H1 (cell line): ENCODE measurements at regions of chr3 and their contacts with region 1.

Region 1: DNA sequence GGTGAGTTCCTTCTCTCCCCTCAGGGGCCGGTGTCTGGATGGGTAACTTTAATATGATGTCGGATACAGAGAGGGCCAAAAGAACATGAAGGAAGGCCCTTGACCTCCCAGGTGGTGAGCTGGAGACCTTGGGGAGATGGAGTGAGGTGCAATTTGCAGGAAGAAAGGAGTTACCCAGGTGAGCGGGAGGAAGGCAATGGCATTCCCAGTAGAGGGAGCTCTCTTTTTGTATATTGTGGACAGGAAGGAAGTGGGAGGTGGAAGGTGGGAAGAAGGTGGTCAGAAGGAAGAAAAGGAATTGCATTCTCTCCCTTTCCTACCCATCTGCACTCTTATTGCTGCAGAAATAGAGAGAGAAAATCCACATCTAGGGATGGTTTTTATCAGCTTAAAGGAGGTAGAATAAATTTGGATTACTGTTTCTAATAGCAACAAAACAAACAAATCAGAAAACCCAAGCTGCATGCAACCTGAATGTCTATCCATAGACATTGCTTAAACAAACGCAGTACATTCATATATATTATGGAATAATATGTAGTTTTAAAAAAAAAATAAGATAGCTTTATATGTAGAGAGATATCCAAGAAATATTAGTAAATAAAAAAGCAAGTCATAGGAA is 169.0 kb upstream of the TSC22D2 start:
- DNase-seq: peak; percentile 38 to 50
- H3K4me3 ChIP-seq: no peak overlapping the region
- H3K27ac ChIP-seq: no peak overlapping the region
- H3K4me1 ChIP-seq: peaks cover 0 to 8% (median 2%) of the 10 kb centered on the region in 4 experiments; a peak in 4 of 7 replicates
- H3K27me3 ChIP-seq: no peaks in the 10 kb centered on the region
- CTCF ChIP-seq: peak; percentile 44 to 84 (median 72)
- EP300 ChIP-seq: no peak
- POLR2A ChIP-seq: no peak
- RAD21 ChIP-seq: peak; percentile 87 to 90

Region 2: DNA sequence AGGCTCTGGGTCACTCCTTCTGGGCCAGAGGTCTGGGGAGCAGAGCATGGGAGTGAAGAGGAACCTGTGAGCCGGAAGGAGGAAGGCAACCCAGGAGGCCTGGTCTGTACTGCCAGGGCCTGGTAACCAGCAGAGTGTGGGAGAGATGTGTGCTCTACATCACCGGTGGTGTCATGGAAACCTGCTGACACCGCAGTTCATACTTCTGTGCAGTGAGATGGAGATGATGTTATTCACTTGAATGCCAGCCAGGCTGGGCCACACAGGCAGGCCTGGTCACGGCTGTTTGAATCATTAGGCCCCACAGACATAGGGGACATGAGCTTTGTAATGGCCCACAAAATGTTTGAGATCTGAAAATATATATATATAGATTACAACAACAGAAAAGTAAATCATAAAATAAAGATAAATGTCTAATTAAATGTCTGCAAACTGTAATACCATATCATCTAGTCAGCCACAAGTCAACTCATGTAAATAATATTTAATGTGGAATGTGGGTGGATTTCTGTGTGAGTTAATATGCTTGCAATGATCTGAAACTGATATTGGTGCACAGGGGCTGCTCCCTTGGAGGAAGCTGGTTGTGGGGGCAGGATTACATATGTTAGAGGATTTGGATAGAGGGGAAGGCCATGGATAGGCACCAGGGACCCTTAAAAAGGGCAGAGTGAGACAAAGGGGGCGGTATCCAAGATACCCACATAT is 159.9 kb before region 1 on chr3:
- CTCF ChIA-PET with region 1: no interaction called
- POLR2A ChIA-PET with region 1: no interaction called
- DNase-seq: no peak
- H3K4me3 ChIP-seq: no peak overlapping the region
- H3K27ac ChIP-seq: no peak overlapping the region
- H3K4me1 ChIP-seq: peaks cover 0 to 3% (median under 1%) of the 10 kb centered on the region in 4 experiments; a peak in 2 of 7 replicates
- H3K27me3 ChIP-seq: no peaks in the 10 kb centered on the region
- CTCF ChIP-seq: no peak
- EP300 ChIP-seq: no peak
- POLR2A ChIP-seq: no peak
- RAD21 ChIP-seq: no peak

Region 3: GRCh38 chr3:150094150-150094925 is 144.8 kb before region 1 on chr3:
- CTCF ChIA-PET with region 1: no interaction called
- POLR2A ChIA-PET with region 1: no interaction called
- DNase-seq: no peak
- H3K4me3 ChIP-seq: no peak overlapping the region
- H3K27ac ChIP-seq: no peak overlapping the region
- H3K4me1 ChIP-seq: peaks cover 8 to 15% (median 12%) of the 10 kb centered on the region in 4 experiments; a peak in 6 of 7 replicates
- H3K27me3 ChIP-seq: no peaks in the 10 kb centered on the region
- CTCF ChIP-seq: no peak
- EP300 ChIP-seq: no peak
- POLR2A ChIP-seq: no peak
- RAD21 ChIP-seq: no peak

Region 4: DNA sequence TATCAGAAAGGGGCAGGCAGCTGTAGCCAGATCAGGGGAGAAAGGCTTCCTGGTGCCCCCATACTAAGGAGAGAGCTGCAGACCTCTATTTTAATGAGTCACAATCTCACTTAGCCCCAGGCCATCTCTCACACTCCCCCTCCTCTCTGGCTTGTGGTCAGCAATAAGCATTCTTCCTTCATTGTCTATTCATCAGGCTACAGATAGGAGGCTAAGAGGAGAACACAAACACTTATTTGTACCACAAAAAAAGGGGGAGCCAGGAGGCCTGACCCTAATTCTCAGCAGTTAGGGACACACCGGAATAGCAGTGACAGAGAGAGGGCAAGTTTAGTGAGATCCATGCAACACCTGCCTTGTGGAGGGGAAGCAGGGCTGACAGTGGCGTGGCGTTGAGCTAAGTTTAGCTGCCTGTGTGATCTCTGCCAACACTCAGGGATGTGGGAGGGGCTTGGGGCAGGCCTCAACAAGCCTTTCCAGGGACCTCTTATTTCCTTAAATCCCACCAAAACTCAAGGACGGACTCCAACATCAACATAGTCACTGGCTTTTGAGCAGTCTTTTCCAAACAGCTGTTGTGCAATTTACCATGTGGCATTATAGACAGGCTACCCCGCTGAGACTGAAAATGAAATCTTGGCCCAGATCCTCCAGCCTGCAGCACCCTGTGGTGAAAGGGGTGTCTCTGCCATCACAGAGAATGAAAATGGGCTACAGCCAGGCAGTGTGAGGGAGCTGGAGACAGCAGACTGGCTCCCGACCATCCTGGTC is 22.9 kb before region 1 on chr3:
- CTCF ChIA-PET with region 1: interaction called, 14 read pairs
- POLR2A ChIA-PET with region 1: no interaction called
- DNase-seq: no peak
- H3K4me3 ChIP-seq: no peak overlapping the region
- H3K27ac ChIP-seq: no peak overlapping the region
- H3K4me1 ChIP-seq: peaks cover 0 to 6% (median 5%) of the 10 kb centered on the region in 4 experiments; a peak in 5 of 7 replicates
- H3K27me3 ChIP-seq: no peaks in the 10 kb centered on the region
- CTCF ChIP-seq: no peak
- EP300 ChIP-seq: no peak
- POLR2A ChIP-seq: no peak
- RAD21 ChIP-seq: no peak

Region 5: DNA sequence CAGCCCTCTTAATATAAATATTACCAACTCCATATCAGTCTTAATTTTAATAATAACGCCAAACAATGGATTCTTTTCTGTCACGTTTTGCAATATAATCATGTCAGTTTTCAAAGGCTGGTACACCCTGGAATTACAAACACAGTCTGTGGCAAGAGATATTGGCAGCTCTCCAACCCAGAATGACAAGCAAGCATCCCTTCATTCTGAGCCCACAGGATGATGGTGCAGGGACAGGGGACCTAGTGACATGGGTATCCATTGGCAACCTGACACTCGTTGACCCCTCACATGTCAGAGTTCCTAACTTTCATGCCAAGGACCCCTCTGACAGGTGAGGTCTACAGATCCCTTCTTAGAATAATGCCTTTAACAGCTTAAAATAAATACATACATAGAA is 14.5 kb after region 1 on chr3:
- CTCF ChIA-PET with region 1: interaction called, 34 read pairs
- POLR2A ChIA-PET with region 1: interaction called, 3 read pairs
- DNase-seq: no peak
- H3K4me3 ChIP-seq: no peak overlapping the region
- H3K27ac ChIP-seq: no peak overlapping the region
- H3K4me1 ChIP-seq: no peaks in the 10 kb centered on the region; a peak in 1 of 7 replicates
- H3K27me3 ChIP-seq: no peaks in the 10 kb centered on the region
- CTCF ChIP-seq: no peak
- EP300 ChIP-seq: no peak
- POLR2A ChIP-seq: no peak
- RAD21 ChIP-seq: no peak

Region 6: DNA sequence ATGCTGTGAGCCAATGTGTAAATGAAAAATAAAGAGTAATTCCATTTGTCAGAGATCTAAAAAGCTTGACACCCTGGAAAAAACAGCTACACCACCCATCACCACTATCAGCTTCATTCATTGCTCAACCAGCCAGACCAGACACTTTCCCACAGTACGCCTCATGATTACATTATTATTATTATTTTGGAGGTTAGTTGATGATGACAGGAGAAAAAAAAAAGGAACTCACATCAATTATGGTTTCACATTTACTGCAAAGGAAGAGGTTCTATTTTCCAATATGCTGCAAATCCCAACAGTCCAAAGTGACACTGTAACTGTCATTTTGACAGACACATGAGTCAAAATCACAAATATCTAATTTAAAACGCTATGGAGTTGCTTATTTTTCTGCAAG is 34.3 kb after region 1 on chr3:
- CTCF ChIA-PET with region 1: interaction called, 19 read pairs
- POLR2A ChIA-PET with region 1: no interaction called
- DNase-seq: no peak
- H3K4me3 ChIP-seq: no peak overlapping the region
- H3K27ac ChIP-seq: no peak overlapping the region
- H3K4me1 ChIP-seq: peaks cover 0 to 3% (median 0%) of the 10 kb centered on the region in 4 experiments; a peak in 1 of 7 replicates
- H3K27me3 ChIP-seq: no peaks in the 10 kb centered on the region
- CTCF ChIP-seq: no peak
- EP300 ChIP-seq: no peak
- POLR2A ChIP-seq: no peak
- RAD21 ChIP-seq: no peak

Region 7: GRCh38 chr3:150286390-150287147 is 47.5 kb after region 1 on chr3:
- CTCF ChIA-PET with region 1: interaction called, 19 read pairs
- POLR2A ChIA-PET with region 1: no interaction called
- DNase-seq: peak in 1 of 2 experiments; percentile 51
- H3K4me3 ChIP-seq: no peak overlapping the region
- H3K27ac ChIP-seq: no peak overlapping the region
- H3K4me1 ChIP-seq: no peaks in the 10 kb centered on the region
- H3K27me3 ChIP-seq: no peaks in the 10 kb centered on the region
- CTCF ChIP-seq: peak in 2 of 3 experiments; percentile 66 to 77; a peak in 3 of 4 replicates
- EP300 ChIP-seq: no peak
- POLR2A ChIP-seq: no peak
- RAD21 ChIP-seq: peak; percentile 75 to 77

Region 8: DNA sequence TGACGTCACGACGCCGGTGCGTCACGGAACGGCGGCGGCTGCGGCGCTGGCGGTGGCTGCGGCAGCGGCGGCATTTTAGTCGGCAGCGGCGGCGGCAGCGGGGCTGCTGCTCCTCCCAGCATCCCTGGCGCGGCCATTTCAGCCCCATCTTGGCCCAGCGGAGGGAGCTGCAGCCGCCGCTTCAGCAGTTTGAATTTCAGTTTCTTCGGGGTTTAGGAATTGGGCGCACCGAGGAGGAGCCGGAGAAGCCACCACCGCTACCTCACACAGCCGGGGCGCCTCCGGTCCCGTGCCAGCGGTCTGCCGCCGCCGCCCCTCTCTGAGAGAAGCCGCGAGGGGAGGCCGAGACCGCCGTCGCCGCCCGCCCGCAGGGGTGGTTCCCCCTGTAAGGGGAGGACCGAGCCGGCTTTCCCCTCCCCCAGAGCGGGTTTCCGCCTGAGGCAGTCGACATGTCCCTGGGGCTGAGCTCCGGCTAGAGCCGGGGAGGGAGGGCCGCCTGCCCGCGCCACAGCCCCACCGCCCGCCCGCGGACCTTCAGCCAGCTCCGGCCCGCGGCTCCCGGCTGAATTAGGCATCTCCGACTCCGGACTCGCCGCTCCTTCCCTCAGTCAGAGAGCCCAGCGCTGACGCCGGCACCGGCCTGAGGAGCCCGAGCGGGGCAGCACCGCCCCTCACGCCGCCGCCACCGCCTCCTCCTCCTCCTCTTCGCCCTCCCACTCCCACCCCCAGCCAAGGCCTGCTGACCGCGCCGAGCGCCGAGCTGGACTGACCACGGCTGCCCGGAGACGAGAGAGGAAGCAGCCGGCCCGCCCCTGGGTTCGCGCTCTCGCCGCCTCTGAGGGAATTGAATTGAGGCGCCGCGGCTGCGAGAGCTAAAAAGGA is 169.4 kb after region 1 on chr3 and contains the start of gene TSC22D2:
- CTCF ChIA-PET with region 1: interaction called, 35 read pairs
- POLR2A ChIA-PET with region 1: interaction called, 4 read pairs
- DNase-seq: peak in 1 of 2 experiments; percentile 97
- H3K4me3 ChIP-seq: peak within 1 kb of the TSS; percentile 72 to 95 (median 90)
- H3K27ac ChIP-seq: peak within 1 kb of the TSS; percentile 79
- H3K4me1 ChIP-seq: peaks cover 0 to 3% (median 2%) of the 10 kb centered on the region in 4 experiments; a peak in 3 of 7 replicates
- H3K27me3 ChIP-seq: no peaks in the 10 kb centered on the region
- CTCF ChIP-seq: no peak; a peak in 1 of 4 replicates
- EP300 ChIP-seq: peak in 1 of 2 experiments; percentile 57; a peak in 1 of 3 replicates
- POLR2A ChIP-seq: peak; percentile 29 to 73
- RAD21 ChIP-seq: peak in 1 of 2 experiments; percentile 1; a peak in 1 of 4 replicates
- total RNA-seq, gene TSC22D2: 25.8 and 27.6 TPM in 2 replicates

Region 9: DNA sequence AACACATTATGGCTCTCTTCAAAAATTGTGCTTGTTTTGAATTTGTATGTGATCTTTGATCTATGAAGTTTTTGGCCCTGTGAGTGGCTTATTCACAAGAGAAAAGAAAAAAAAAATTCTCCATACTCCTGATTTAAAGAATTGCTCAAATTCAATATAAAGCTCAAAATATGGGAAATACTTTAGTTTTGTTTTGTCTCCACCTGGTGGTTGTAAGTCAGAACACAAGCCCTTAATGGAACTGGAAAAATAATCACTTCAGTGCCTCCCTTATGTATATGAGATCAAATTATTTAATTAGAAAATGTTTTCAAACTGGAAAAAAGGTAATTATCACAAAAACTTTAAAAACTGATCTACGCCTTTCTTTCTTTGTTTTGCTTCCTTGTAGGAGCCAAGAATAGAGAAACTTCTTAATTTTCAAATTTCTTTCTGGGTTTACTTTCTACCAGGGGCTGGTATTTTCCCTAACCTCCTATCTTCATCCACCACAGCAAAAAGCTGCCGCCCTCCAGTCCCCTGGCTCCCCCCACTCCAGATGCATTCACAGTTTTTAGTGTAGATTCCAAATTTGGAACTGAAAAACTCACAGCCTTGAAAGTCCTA is 256.6 kb after region 1 on chr3:
- CTCF ChIA-PET with region 1: interaction called, 76 read pairs
- POLR2A ChIA-PET with region 1: interaction called, 4 read pairs
- DNase-seq: no peak
- H3K4me3 ChIP-seq: no peak overlapping the region
- H3K27ac ChIP-seq: no peak overlapping the region
- H3K4me1 ChIP-seq: no peaks in the 10 kb centered on the region
- H3K27me3 ChIP-seq: peaks cover 0 to 1% (median 0%) of the 10 kb centered on the region in 4 experiments; a peak in 1 of 7 replicates
- CTCF ChIP-seq: peak in 2 of 3 experiments; percentile 44 to 54; a peak in 2 of 4 replicates
- EP300 ChIP-seq: no peak
- POLR2A ChIP-seq: no peak
- RAD21 ChIP-seq: peak; percentile 75 to 80